A673 (cell line): ENCODE measurements at regions of chr22 and their contacts with region 1.

Region 1: GRCh38 chr22:50001388-50002231 is 11.0 kb downstream of the IL17REL start:
- DNase-seq: peak; percentile 61
- H3K4me3 ChIP-seq: no peak overlapping the region
- H3K27ac ChIP-seq: no peak overlapping the region
- H3K4me1 ChIP-seq: peaks cover 11% of the 10 kb centered on the region
- H3K27me3 ChIP-seq: no peaks in the 10 kb centered on the region
- CTCF ChIP-seq: no peak

Region 2: GRCh38 chr22:49979587-49980264 is 21.9 kb before region 1 on chr22:
- CTCF ChIA-PET with region 1: interaction called, 17 read pairs
- POLR2A ChIA-PET with region 1: no interaction called
- intact Hi-C with region 1: no loop called
- DNase-seq: peak; percentile 67
- H3K4me3 ChIP-seq: no peak overlapping the region
- H3K27ac ChIP-seq: no peak overlapping the region
- H3K4me1 ChIP-seq: peaks cover 9% of the 10 kb centered on the region
- H3K27me3 ChIP-seq: peaks cover 18% of the 10 kb centered on the region
- CTCF ChIP-seq: peak; percentile 58

Region 3: GRCh38 chr22:50030297-50031188 is 28.9 kb after region 1 on chr22:
- CTCF ChIA-PET with region 1: no interaction called
- POLR2A ChIA-PET with region 1: no interaction called
- intact Hi-C with region 1: no loop called
- DNase-seq: peak; percentile 88
- H3K4me3 ChIP-seq: no peak overlapping the region
- H3K27ac ChIP-seq: no peak overlapping the region
- H3K4me1 ChIP-seq: peaks cover 4% of the 10 kb centered on the region
- H3K27me3 ChIP-seq: no peaks in the 10 kb centered on the region
- CTCF ChIP-seq: peak; percentile 95